ENCODE measurements at regions of chr20 and their contacts with region 1.

Region 1: DNA sequence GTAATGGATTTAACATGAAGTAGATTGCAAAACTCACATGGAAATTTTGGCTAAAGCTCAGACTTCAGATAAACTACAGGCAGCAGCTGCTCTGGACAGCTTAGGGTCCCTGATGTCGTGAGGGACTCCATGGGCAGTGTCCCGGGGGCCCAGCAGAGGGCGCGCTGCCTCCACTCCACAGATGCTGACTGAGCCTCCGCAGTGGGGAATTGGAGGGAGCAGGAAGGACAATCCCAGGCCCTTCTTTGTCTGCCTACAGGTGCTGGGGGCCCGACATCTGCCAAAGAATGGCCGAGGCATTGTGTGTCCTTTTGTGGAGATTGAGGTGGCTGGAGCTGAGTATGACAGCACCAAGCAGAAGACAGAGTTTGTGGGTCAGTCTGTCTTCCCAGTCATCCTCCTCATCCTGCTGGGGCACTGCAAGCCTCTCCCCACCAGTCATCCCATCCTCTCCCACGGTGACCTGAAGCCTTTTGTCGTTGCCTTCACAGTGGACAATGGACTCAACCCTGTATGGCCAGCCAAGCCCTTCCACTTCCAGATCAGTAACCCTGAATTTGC is 35.9 kb downstream of the PLCG1 start:
- DNase-seq: peak; percentile 84 to 95 (median 87)
- H3K4me3 ChIP-seq: no peak overlapping the region
- H3K27ac ChIP-seq: peak overlapping the region in 3 of 5 donors; percentile 50 to 89 (median 81)
- H3K4me1 ChIP-seq: peaks cover 14 to 25% of the 10 kb centered on the region in 2 donors
- H3K27me3 ChIP-seq: no peaks in the 10 kb centered on the region
- CTCF ChIP-seq: peak; percentile 93 to 99 (median 98)
- POLR2A ChIP-seq: no peak

Region 2: GRCh38 chr20:41057999-41058896 is 115.0 kb before region 1 on chr20:
- intact Hi-C with region 1: no loop called
- DNase-seq: no peak
- H3K4me3 ChIP-seq: no peak overlapping the region
- H3K27ac ChIP-seq: peak overlapping the region in 2 of 5 donors; percentile 14 to 44
- H3K4me1 ChIP-seq: peaks cover 28 to 43% of the 10 kb centered on the region in 2 donors
- H3K27me3 ChIP-seq: no peaks in the 10 kb centered on the region
- CTCF ChIP-seq: no peak
- POLR2A ChIP-seq: no peak

Region 3: GRCh38 chr20:41110930-41111577 is 62.2 kb before region 1 on chr20:
- intact Hi-C with region 1: no loop called
- DNase-seq: no peak
- H3K4me3 ChIP-seq: no peak overlapping the region
- H3K27ac ChIP-seq: no peak overlapping the region
- H3K4me1 ChIP-seq: no peaks in the 10 kb centered on the region
- H3K27me3 ChIP-seq: no peaks in the 10 kb centered on the region
- CTCF ChIP-seq: no peak
- POLR2A ChIP-seq: no peak

Region 4: DNA sequence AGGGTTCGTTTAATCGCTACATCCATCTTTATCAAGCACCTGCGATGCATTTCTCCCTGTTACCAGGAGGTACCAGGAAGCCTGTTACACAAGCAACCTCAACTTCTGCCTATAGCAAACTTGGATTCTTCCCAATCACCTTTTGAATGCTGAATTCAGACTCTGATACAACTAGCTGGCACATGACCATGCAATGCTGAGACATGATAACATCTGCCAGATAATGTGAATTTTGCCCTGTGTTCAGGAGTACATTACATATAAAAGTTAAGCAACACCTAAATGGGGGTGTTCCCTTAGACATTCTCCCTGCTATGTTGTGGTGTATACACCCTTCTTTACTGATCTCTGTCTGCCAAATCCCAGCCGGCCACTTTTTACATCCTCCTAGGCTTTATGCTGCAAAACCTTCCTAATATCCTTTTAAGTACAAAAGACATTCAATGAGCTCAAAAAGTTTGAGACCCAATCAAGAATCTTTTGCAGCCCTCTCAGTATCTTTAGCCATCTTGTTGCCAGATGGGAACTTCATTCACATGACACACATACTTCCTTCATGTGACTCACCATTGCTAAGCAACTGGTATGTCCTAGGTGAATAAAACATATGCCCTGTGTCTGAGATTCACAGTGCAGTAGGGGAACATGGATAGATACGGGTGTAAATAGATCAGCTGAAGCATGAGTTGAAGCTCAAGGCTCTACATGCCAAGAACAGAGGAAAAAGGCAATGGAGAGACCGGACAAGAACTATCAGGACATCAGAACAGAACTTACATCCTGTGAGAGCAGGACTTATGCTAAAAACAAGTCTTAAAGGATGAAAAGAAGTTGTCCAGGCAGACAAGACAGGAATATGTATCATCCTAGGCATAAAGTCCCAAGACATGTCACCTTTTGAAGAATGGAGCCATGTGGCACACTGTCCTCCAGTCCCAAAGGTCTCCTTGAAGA is 60.0 kb after region 1 on chr20:
- intact Hi-C with region 1: loop called (anchors 5 to 10 kb)
- DNase-seq: no peak
- H3K4me3 ChIP-seq: no peak overlapping the region
- H3K27ac ChIP-seq: peak overlapping the region; percentile 38 to 71 (median 52)
- H3K4me1 ChIP-seq: peaks cover 28 to 33% of the 10 kb centered on the region in 2 donors
- H3K27me3 ChIP-seq: no peaks in the 10 kb centered on the region
- CTCF ChIP-seq: no peak
- POLR2A ChIP-seq: no peak

Measured in adrenal gland (tissue), 19 donors.